CD4-positive, alpha-beta T cell (primary cell): ENCODE measurements at regions of chr15 and their contacts with region 1.

Region 1: GRCh38 chr15:59751552-59752413 is 62.7 kb upstream of the BNIP2 start:
- DNase-seq: peak in 5 of 14 experiments; percentile 3 to 84 (median 80)
- ATAC-seq: peak; percentile 99
- H3K4me3 ChIP-seq: no peak overlapping the region
- H3K4me3 Mint-ChIP-seq: no peak overlapping the region
- H3K27ac ChIP-seq: no peak overlapping the region
- H3K27ac Mint-ChIP-seq: no peak overlapping the region
- H3K4me1 ChIP-seq: peaks cover 4% of the 10 kb centered on the region
- H3K4me1 Mint-ChIP-seq: peaks cover 17% of the 10 kb centered on the region
- H3K27me3 ChIP-seq: no peaks in the 10 kb centered on the region
- H3K27me3 Mint-ChIP-seq: peaks cover 6% of the 10 kb centered on the region
- CTCF ChIP-seq: peak; percentile 89

Region 2: GRCh38 chr15:59797756-59798604 is 46.2 kb after region 1 on chr15:
- CTCF ChIA-PET with region 1: interaction called, 7 read pairs
- POLR2A ChIA-PET with region 1: interaction called, 16 read pairs
- intact Hi-C with region 1: loop called in 1 of 2 experiments (anchors 5 kb)
- DNase-seq: peak in 1 of 14 experiments; percentile 39
- ATAC-seq: no peak
- H3K4me3 ChIP-seq: peak overlapping the region; percentile 20
- H3K4me3 Mint-ChIP-seq: peak overlapping the region; percentile 69
- H3K27ac ChIP-seq: peak overlapping the region in 1 of 2 donors; percentile 55
- H3K27ac Mint-ChIP-seq: peak overlapping the region; percentile 81
- H3K4me1 ChIP-seq: peaks cover 54% of the 10 kb centered on the region
- H3K4me1 Mint-ChIP-seq: peaks cover 80% of the 10 kb centered on the region
- H3K27me3 ChIP-seq: no peaks in the 10 kb centered on the region
- H3K27me3 Mint-ChIP-seq: no peaks in the 10 kb centered on the region
- CTCF ChIP-seq: no peak

Region 3: GRCh38 chr15:59997070-59997701 is 245.4 kb after region 1 on chr15:
- CTCF ChIA-PET with region 1: interaction called, 4 read pairs
- POLR2A ChIA-PET with region 1: no interaction called
- intact Hi-C with region 1: loop called in 1 of 2 experiments (anchors 5 kb)
- DNase-seq: peak in 12 of 14 experiments; percentile 25 to 77 (median 49)
- ATAC-seq: peak; percentile 65
- H3K4me3 ChIP-seq: no peak overlapping the region
- H3K4me3 Mint-ChIP-seq: no peak overlapping the region
- H3K27ac ChIP-seq: no peak overlapping the region
- H3K27ac Mint-ChIP-seq: no peak overlapping the region
- H3K4me1 ChIP-seq: peaks cover 52% of the 10 kb centered on the region
- H3K4me1 Mint-ChIP-seq: peaks cover 73% of the 10 kb centered on the region
- H3K27me3 ChIP-seq: peaks cover 95 to 100% of the 10 kb centered on the region in 2 experiments
- H3K27me3 Mint-ChIP-seq: peaks cover 98% of the 10 kb centered on the region
- CTCF ChIP-seq: no peak

Region 4: GRCh38 chr15:60128000-60128376 is 376.2 kb after region 1 on chr15:
- CTCF ChIA-PET with region 1: interaction called, 4 read pairs
- POLR2A ChIA-PET with region 1: no interaction called
- intact Hi-C with region 1: loop called (anchors 1 to 5 kb)
- DNase-seq: peak in 1 of 14 experiments; percentile 6
- ATAC-seq: no peak
- H3K4me3 ChIP-seq: peak overlapping the region; percentile 55
- H3K4me3 Mint-ChIP-seq: peak overlapping the region; percentile 78
- H3K27ac ChIP-seq: peak overlapping the region; percentile 64 to 68
- H3K27ac Mint-ChIP-seq: peak overlapping the region; percentile 88
- H3K4me1 ChIP-seq: peaks cover 14% of the 10 kb centered on the region
- H3K4me1 Mint-ChIP-seq: peaks cover 52% of the 10 kb centered on the region
- H3K27me3 ChIP-seq: no peaks in the 10 kb centered on the region
- H3K27me3 Mint-ChIP-seq: no peaks in the 10 kb centered on the region
- CTCF ChIP-seq: no peak

Region 5: GRCh38 chr15:60326824-60327654 is 575.3 kb after region 1 on chr15:
- CTCF ChIA-PET with region 1: interaction called, 12 read pairs
- POLR2A ChIA-PET with region 1: interaction called, 7 read pairs
- intact Hi-C with region 1: loop called (anchors 2 kb)
- DNase-seq: peak in 9 of 14 experiments; percentile 0 to 78 (median 8)
- ATAC-seq: peak; percentile 49
- H3K4me3 ChIP-seq: no peak overlapping the region
- H3K4me3 Mint-ChIP-seq: no peak overlapping the region
- H3K27ac ChIP-seq: no peak overlapping the region
- H3K27ac Mint-ChIP-seq: no peak overlapping the region
- H3K4me1 ChIP-seq: no peaks in the 10 kb centered on the region
- H3K4me1 Mint-ChIP-seq: peaks cover 6% of the 10 kb centered on the region
- H3K27me3 ChIP-seq: peaks cover 13 to 23% of the 10 kb centered on the region in 2 experiments
- H3K27me3 Mint-ChIP-seq: peaks cover 77% of the 10 kb centered on the region
- CTCF ChIP-seq: peak; percentile 69